ENCODE measurements at regions of chr1 and their contacts with region 1.

Region 1: DNA sequence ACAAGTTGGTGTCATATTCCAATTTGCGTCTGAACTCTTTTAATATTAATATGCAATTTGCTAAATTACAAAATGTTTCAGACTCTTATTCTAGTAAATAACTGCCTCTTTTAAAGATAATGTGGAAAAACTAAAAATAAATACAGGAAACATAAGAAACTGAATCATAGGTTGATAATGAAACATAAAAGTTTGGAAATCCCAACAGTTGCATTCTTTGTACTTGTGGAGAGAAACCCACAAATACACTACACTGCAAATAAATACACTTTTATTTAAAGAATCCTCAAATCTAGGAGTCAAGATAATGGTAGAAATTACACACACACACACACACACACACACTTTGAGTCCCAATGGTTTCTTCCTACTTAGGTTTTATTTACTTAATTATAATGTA is 5.2 kb downstream of the BRINP3 start:
- DNase-seq: no peak
- ATAC-seq: no peak
- H3K4me3 Mint-ChIP-seq: no peak overlapping the region
- H3K27ac Mint-ChIP-seq: no peak overlapping the region
- H3K4me1 Mint-ChIP-seq: no peaks in the 10 kb centered on the region
- H3K27me3 Mint-ChIP-seq: peaks cover 11% of the 10 kb centered on the region
- CTCF ChIP-seq: no peak

Region 2: DNA sequence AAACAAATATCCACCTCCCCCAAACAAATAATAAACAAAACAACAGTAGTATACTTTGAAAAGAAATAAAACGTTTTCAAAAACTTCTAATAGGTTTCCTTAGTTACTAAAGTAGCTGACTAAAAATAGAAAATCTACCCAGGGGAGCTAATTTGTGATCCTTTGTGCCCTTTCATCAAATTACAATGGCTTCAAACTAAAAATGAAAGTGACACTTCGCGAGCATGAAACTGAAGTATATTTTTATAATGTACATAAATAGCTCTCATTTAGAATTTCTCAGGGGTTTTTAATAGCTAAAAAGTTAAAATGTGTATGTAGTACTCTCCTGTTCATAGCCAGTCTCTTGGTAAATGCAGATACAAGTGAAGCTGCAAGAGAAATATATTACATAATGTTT is 73.3 kb before region 1 on chr1:
- CTCF ChIA-PET with region 1: no interaction called
- POLR2A ChIA-PET with region 1: no interaction called
- intact Hi-C with region 1: loop called (anchors 2 kb)
- DNase-seq: no peak
- ATAC-seq: no peak
- H3K4me3 Mint-ChIP-seq: no peak overlapping the region
- H3K27ac Mint-ChIP-seq: no peak overlapping the region
- H3K4me1 Mint-ChIP-seq: no peaks in the 10 kb centered on the region
- H3K27me3 Mint-ChIP-seq: no peaks in the 10 kb centered on the region
- CTCF ChIP-seq: no peak

Region 3: GRCh38 chr1:190429141-190429540 is 43.4 kb before region 1 on chr1:
- CTCF ChIA-PET with region 1: no interaction called
- POLR2A ChIA-PET with region 1: no interaction called
- intact Hi-C with region 1: no loop called
- DNase-seq: no peak
- ATAC-seq: no peak
- H3K4me3 Mint-ChIP-seq: no peak overlapping the region
- H3K27ac Mint-ChIP-seq: no peak overlapping the region
- H3K4me1 Mint-ChIP-seq: no peaks in the 10 kb centered on the region
- H3K27me3 Mint-ChIP-seq: no peaks in the 10 kb centered on the region
- CTCF ChIP-seq: no peak